Right cardiac atrium (tissue), 5 donors: ENCODE measurements at regions of chr6 and their contacts with region 1.

Region 1: DNA sequence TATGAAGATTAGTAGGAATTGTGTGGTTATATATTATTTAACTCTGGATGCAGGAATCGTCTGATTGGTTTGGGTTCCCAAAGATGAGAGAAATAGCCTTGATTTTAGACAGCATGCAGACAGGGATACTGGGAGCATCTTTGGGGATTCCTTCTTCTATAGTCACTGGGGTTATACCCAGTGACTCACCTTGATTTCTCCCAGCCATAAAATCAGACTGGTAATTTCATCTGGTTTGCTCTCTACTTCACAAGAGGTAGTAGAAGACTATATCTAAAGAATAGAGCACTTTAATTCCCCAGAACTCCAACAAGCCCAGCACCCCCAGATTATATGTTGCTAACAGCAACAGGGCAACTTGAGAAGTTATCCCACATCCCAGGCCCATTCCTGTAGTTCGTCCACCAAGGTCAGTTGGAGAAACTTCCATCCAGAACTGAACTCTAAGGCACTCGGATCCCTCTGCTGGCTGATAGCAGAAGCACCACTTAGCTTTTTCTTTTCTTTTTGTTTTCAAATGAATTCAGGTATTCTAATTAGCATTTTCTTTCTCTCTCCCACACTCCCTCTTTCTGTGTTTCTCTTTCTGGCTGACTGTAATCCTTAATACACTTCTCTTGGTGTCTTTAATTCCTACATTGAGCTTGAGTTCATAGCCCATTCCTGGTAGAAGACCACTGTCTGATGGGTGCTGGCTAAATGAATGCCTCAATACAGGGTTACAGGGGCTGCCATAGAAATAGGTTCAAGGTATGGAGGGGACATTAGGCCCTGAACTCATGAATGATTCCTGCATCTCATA is 20.4 kb upstream of the EFHC1 start:
- DNase-seq: peak in 1 of 3 donors; percentile 30
- ATAC-seq: peak; percentile 63 to 68
- H3K4me3 ChIP-seq: no peak overlapping the region
- H3K27ac ChIP-seq: no peak overlapping the region
- H3K4me1 ChIP-seq: no peaks in the 10 kb centered on the region
- H3K27me3 ChIP-seq: no peaks in the 10 kb centered on the region

Region 2: GRCh38 chr6:52020945-52021570 is 378.7 kb before region 1 on chr6:
- intact Hi-C with region 1: no loop called
- DNase-seq: no peak
- ATAC-seq: no peak
- H3K4me3 ChIP-seq: no peak overlapping the region
- H3K27ac ChIP-seq: no peak overlapping the region
- H3K4me1 ChIP-seq: no peaks in the 10 kb centered on the region
- H3K27me3 ChIP-seq: no peaks in the 10 kb centered on the region

Region 3: GRCh38 chr6:52304983-52305390 is 94.7 kb before region 1 on chr6:
- intact Hi-C with region 1: loop called in 1 of 4 experiments (anchors 10 kb)
- DNase-seq: no peak
- ATAC-seq: peak; percentile 73 to 81
- H3K4me3 ChIP-seq: no peak overlapping the region
- H3K27ac ChIP-seq: no peak overlapping the region
- H3K4me1 ChIP-seq: peaks cover 3% of the 10 kb centered on the region
- H3K27me3 ChIP-seq: no peaks in the 10 kb centered on the region

Region 4: GRCh38 chr6:52361945-52362442 is 37.7 kb before region 1 on chr6 and contains the start of gene PAQR8:
- intact Hi-C with region 1: loop called in 1 of 4 experiments (anchors 5 kb)
- DNase-seq: peak; percentile 81 to 94 (median 93)
- ATAC-seq: peak; percentile 98 to 99
- H3K4me3 ChIP-seq: peak within 1 kb of the TSS; percentile 77
- H3K27ac ChIP-seq: peak within 1 kb of the TSS; percentile 82
- H3K4me1 ChIP-seq: no peaks in the 10 kb centered on the region
- H3K27me3 ChIP-seq: no peaks in the 10 kb centered on the region
- total RNA-seq, gene PAQR8: 4.5 to 6.2 (median 5.4) TPM